ENCODE measurements at regions of chr1 and their contacts with region 1.

Region 1: DNA sequence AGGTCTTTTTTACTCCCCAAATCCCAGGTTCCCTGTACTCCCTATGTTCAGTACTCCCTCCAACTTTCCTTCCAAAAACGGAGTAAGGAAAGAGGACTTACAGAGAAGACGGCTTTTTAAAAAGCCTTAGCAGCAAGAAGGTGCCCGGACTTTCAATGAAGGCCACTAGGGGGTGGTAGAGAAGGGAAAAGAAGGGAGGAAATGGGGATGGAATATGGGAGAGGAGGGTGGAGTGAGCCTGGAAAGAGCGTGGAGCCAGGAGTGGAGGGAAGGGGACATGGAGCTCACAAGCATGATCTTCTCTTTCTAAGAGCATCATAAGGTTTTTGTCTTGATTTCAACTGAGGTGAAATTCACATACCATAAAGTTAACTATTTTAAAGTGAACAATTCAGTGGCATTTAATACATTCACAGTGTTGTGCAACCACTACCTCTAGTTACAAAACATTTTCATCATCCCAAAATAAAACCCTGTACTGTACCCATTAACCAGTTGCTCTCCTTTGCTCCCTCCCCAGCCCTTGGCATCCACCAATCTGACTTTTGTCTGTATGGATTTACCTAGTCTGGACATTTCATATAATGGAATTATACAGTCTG is 129.9 kb downstream of the ZNF281 start:
- DNase-seq: peak; percentile 74
- H3K4me3 ChIP-seq: no peak overlapping the region
- H3K27ac ChIP-seq: no peak overlapping the region
- H3K4me1 ChIP-seq: no peaks in the 10 kb centered on the region
- H3K27me3 ChIP-seq: peaks cover 3 to 5% of the 10 kb centered on the region in 2 experiments
- CTCF ChIP-seq: peak; percentile 66 to 69
- POLR2A ChIP-seq: no peak

Region 2: DNA sequence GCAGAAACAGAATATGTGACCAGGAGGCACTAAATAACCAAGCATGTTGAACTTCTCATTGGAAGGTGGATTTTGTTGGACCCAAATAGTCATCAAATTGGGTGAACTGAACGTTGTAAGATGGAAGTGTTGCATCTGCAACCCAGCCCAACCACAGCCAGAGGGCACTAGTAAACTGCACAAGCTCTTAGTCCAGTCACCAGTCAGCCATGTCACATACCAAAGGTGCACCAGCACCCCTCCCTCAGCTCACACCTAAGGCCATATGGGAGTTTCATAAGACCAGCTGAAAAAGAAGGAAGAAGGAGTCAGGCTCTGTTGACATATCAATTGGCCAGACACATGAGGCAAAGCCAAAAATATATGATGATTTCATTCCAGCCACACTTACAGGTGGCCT is 734.1 kb before region 1 on chr1:
- CTCF ChIA-PET with region 1: interaction called, 29 read pairs
- POLR2A ChIA-PET with region 1: no interaction called
- dilution Hi-C with region 1: no loop called
- intact Hi-C with region 1: loop called (anchors 10 kb)
- DNase-seq: peak; percentile 30
- H3K4me3 ChIP-seq: no peak overlapping the region
- H3K27ac ChIP-seq: no peak overlapping the region
- H3K4me1 ChIP-seq: no peaks in the 10 kb centered on the region
- H3K27me3 ChIP-seq: no peaks in the 10 kb centered on the region
- CTCF ChIP-seq: peak; percentile 17 to 49
- POLR2A ChIP-seq: no peak

Region 3: GRCh38 chr1:200265051-200265450 is 14.9 kb before region 1 on chr1:
- CTCF ChIA-PET with region 1: interaction called, 14 read pairs
- POLR2A ChIA-PET with region 1: no interaction called
- dilution Hi-C with region 1: no loop called
- intact Hi-C with region 1: no loop called
- DNase-seq: peak; percentile 15
- H3K4me3 ChIP-seq: no peak overlapping the region
- H3K27ac ChIP-seq: no peak overlapping the region
- H3K4me1 ChIP-seq: peaks cover 7% of the 10 kb centered on the region
- H3K27me3 ChIP-seq: no peaks in the 10 kb centered on the region
- CTCF ChIP-seq: no peak
- POLR2A ChIP-seq: no peak

Region 4: DNA sequence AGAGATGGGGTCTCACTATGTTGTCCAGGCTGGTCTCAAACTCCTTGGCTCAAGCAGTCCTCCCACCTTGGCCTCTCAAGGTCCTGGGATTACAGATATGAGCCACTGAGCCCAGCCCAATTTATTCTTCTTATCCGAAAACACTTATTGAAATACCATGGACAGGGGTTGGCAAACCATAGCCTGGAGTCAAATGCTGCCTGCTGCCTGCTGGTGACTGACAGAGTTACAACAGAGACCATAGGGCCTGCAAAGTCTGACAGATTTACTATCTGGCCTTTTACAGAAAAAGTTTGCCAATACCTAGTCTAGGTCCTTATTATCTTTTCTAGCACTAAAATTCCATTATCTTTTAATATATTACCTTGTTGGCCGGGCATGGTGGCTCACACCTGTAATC is 217.0 kb after region 1 on chr1:
- CTCF ChIA-PET with region 1: interaction called, 18 read pairs
- POLR2A ChIA-PET with region 1: no interaction called
- dilution Hi-C with region 1: no loop called
- intact Hi-C with region 1: no loop called
- DNase-seq: no peak
- H3K4me3 ChIP-seq: no peak overlapping the region
- H3K27ac ChIP-seq: no peak overlapping the region
- H3K4me1 ChIP-seq: no peaks in the 10 kb centered on the region
- H3K27me3 ChIP-seq: peaks cover 0 to 9% of the 10 kb centered on the region in 2 experiments
- CTCF ChIP-seq: no peak
- POLR2A ChIP-seq: no peak

Region 5: DNA sequence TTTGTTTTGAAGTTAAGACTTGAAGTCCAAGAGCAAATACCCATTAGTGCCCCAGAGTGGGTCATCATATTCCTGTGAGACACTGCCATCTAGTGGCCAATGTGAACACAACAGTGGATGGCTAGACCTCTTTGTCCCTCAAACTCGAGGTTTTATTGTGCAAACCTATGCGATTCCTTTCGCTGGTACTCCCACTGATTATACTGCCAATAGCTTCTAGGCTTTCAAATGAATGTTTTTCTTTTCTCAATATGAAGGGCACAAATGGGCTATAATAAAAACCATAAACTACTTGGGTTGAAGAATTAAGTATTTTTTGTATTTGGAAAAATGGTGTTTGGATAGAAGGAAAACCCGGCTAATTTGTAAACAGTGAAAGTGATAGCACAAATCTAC is 230.3 kb after region 1 on chr1:
- CTCF ChIA-PET with region 1: interaction called, 22 read pairs
- POLR2A ChIA-PET with region 1: no interaction called
- dilution Hi-C with region 1: no loop called
- intact Hi-C with region 1: loop called (anchors 1 kb)
- DNase-seq: peak; percentile 79
- H3K4me3 ChIP-seq: no peak overlapping the region
- H3K27ac ChIP-seq: no peak overlapping the region
- H3K4me1 ChIP-seq: no peaks in the 10 kb centered on the region
- H3K27me3 ChIP-seq: peaks cover 8 to 12% of the 10 kb centered on the region in 2 experiments
- CTCF ChIP-seq: peak; percentile 70 to 77
- POLR2A ChIP-seq: no peak

Measured in endothelial cell of umbilical vein (primary cell).